ENCODE measurements at regions of chr5 and their contacts with region 1.

Region 1: DNA sequence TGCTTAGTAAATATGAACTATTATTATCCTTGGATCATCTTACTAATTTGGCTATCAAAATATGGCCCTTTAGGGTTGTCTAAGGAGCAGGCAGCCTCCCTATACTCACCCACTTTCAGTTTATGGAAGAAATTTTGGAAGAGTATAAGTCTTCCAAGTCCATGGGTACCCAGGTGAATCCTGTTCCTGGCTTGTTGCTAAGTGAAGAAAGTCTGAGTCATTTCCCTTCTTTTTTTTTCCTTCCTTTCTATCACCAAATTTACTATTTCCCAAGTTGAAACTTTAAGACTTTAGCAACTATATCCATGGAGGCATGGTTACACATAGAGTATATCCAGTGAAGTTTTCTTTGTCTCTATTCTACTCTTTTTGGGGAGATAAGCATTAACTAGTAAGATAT is 184.0 kb upstream of the ACTBL2 start:
- DNase-seq: peak; percentile 34
- H3K4me3 ChIP-seq: no peak overlapping the region
- H3K27ac ChIP-seq: no peak overlapping the region
- H3K4me1 ChIP-seq: peaks cover 8% of the 10 kb centered on the region
- H3K27me3 ChIP-seq: no peaks in the 10 kb centered on the region
- CTCF ChIP-seq: no peak

Region 2: DNA sequence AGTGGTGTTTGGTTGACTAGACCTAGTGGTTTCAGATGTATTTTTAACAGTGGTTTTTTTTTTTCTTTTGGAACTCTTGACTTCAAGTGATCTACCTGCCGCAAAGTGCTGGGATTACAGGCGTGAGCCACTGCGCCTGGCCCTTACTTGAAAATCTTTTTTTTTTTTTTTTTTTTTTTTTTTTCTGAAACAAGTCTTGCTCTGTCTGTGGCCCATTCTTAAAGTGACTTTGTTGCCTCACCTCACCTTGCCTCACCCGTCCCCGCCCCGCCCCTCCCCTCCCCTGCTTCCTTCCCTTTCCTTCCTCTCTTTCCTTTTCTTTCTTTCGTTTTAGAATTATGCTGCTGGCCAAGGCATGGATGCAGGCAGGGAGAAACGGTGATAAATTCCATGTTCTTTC is 466.7 kb before region 1 on chr5:
- CTCF ChIA-PET with region 1: no interaction called
- dilution Hi-C with region 1: no loop called
- in situ Hi-C with region 1: no loop called
- intact Hi-C with region 1: no loop called
- DNase-seq: no peak
- H3K4me3 ChIP-seq: no peak overlapping the region
- H3K27ac ChIP-seq: no peak overlapping the region
- H3K4me1 ChIP-seq: peaks cover 7% of the 10 kb centered on the region
- H3K27me3 ChIP-seq: no peaks in the 10 kb centered on the region
- CTCF ChIP-seq: no peak

Region 3: DNA sequence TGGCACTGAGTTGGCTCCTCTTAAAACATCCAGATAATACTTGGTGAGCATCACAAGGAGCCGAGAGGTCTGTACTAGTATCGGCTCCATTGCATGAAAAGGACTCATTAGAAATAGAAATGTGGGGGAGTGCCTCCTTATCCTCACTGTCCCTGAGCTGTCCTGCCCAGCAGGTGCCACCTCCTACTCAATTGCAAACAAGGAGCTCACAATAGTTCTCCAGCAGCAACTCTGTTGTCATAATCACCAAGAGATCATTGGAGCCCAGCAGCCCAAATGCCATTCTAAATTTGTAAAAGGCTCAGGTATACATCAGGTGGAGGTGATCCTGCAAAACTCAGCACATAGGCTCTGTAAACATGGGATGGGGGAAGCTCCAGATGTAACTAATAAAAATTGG is 694.2 kb after region 1 on chr5:
- CTCF ChIA-PET with region 1: interaction called, 10 read pairs
- dilution Hi-C with region 1: no loop called
- in situ Hi-C with region 1: no loop called
- intact Hi-C with region 1: no loop called
- DNase-seq: no peak
- H3K4me3 ChIP-seq: no peak overlapping the region
- H3K27ac ChIP-seq: no peak overlapping the region
- H3K4me1 ChIP-seq: no peaks in the 10 kb centered on the region
- H3K27me3 ChIP-seq: no peaks in the 10 kb centered on the region
- CTCF ChIP-seq: no peak

Measured in mammary epithelial cell (primary cell).